Mucosa of descending colon (tissue), 3 donors: ENCODE measurements at regions of chr1 and their contacts with region 1.

Region 1: DNA sequence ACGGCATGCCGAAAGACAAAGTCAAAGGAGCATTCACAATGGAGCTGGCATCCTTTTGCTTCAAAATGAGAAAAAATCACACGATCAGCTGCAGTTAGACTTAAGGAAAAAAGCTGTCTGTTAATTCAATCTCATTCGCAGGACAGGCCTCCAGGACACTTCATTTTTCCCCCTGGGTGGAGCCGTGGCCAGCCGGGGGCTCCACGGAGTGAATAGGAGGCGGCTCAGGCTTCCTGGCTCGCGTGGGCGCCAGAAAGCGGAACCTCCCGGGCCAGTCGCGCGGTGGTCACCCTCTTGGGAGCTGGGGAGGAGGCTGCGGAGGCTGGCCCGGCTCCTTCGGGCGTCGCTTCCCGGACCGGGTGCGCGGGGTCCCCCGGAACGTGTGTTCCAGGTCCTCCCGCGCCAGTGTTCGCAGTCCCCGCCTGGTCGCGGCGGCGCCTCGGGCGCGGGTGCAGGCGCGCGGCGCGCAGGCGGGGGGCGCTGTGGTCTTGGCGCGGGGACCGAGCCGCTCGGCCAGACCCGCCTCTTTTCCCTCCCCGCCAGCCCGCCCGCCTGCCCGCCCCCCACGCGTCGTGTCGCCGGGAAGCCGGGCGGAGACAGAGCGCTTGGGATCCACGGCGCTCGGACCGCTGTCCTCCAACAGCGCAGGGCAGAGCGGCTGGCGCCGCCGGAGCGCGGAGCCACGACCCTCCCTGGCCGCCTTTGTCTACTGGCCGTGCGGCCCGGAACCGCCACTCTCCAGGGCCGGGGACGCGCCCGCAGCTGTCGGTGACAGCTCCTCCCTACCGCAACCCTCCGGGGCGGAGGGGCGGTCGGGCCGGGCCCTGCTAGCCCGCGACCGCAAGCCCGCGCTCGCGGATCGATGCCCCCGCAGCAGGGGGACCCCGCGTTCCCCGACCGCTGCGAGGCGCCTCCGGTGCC is at the start of gene RHOU:
- DNase-seq: peak; percentile 74 to 89 (median 81)
- ATAC-seq: peak; percentile 93
- H3K4me3 ChIP-seq: peak within 1 kb of the TSS; percentile 62
- H3K4me1 ChIP-seq: peaks cover 12% of the 10 kb centered on the region
- CTCF ChIP-seq: peak; percentile 93
- total RNA-seq, gene RHOU: 30.7 to 45.1 (median 39.3) TPM

Region 2: GRCh38 chr1:228989992-228990827 is 255.1 kb after region 1 on chr1:
- intact Hi-C with region 1: loop called in 1 of 2 experiments (anchors 10 kb)
- DNase-seq: peak; percentile 44 to 62 (median 53)
- ATAC-seq: peak; percentile 63
- H3K4me3 ChIP-seq: no peak overlapping the region
- H3K4me1 ChIP-seq: no peaks in the 10 kb centered on the region
- CTCF ChIP-seq: no peak

Region 3: DNA sequence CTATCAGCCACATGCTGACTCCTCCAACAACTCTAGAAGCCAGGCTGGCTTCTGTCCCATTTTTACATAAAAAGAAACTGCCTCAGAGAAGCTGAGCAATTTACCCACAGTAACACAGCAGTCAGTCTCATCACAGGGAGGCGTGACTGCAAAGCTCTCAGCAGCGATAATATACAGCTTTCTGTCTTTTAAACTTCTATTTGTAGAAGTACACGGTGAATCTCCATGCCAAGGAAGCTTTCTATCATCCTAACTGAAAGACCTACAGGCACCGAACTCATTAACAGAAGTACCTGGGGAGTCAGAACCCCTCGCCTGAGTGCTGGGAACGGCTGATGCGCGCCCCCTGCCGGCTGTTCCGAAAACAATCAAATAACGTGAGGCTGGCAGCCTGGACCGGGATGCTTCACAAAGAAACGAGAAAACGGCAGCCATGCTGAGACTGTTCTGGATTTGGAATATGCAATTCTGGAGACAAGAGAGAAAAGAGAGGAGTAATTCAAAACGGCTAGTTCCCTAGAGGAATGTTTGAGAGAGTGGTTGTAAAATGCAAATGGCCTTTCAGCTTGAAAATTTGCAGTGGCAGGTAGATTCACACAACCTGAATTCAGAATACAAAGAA is 492.3 kb after region 1 on chr1:
- intact Hi-C with region 1: loop called (anchors 2 to 5 kb)
- DNase-seq: peak; percentile 80 to 90 (median 88)
- ATAC-seq: peak; percentile 66
- H3K4me3 ChIP-seq: no peak overlapping the region
- H3K4me1 ChIP-seq: peaks cover 10% of the 10 kb centered on the region
- CTCF ChIP-seq: peak; percentile 63